Esophagus squamous epithelium (tissue), 5 donors: ENCODE measurements at regions of chr1 and their contacts with region 1.

Region 1: GRCh38 chr1:3624200-3625136 is at the start of gene TPRG1L:
- DNase-seq: peak; percentile 84
- H3K4me3 ChIP-seq: peak within 1 kb of the TSS; percentile 83 to 99 (median 90)
- H3K27ac ChIP-seq: peak within 1 kb of the TSS; percentile 84 to 97 (median 92)
- H3K4me1 ChIP-seq: peaks cover 24 to 40% (median 26%) of the 10 kb centered on the region in 3 donors
- H3K27me3 ChIP-seq: no peaks in the 10 kb centered on the region
- CTCF ChIP-seq: peak in 1 of 6 experiments; percentile 37
- POLR2A ChIP-seq: peak in 1 of 4 donors; percentile 66
- total RNA-seq, gene TPRG1L: 27.9 to 44.7 (median 33.2) TPM

Region 2: DNA sequence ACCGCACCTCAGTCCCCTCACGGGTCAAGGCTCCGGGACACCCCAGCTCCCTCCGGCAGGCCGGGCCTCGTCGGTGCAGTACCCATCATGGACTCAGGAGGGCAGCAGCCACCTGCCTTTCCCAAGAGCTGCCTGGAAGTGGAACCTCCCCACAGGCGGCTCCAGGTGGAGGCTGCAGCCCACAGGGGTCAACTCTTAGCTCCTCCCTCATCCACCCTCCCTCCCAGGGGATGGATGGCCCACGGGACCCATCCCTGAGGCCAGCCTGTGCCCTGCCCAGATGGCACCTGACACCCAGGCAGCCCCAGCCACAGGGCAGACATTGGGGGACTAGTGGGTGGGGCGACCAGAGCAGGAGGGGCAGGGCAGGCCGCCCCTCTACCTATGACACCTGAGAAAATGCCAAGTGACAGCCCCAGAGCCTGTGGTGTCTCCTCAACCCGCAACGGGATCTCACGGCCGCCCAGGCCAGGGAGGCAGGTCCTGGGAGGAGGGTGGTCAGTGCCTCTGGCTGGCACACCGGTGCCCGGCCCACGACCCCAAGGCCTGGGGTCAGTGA is 171.2 kb before region 1 on chr1:
- intact Hi-C with region 1: loop called (anchors 5 kb)
- DNase-seq: no peak
- H3K4me3 ChIP-seq: no peak overlapping the region
- H3K27ac ChIP-seq: peak overlapping the region in 3 of 4 donors; percentile 72 to 85 (median 82)
- H3K4me1 ChIP-seq: peaks cover 27 to 56% (median 36%) of the 10 kb centered on the region in 3 donors
- H3K27me3 ChIP-seq: peaks cover 0 to 72% (median 2%) of the 10 kb centered on the region in 4 donors
- CTCF ChIP-seq: peak; percentile 89 to 98 (median 93)
- POLR2A ChIP-seq: no peak

Region 3: GRCh38 chr1:3821004-3821403 is 196.5 kb after region 1 on chr1:
- intact Hi-C with region 1: no loop called
- DNase-seq: no peak
- H3K4me3 ChIP-seq: no peak overlapping the region
- H3K27ac ChIP-seq: no peak overlapping the region
- H3K4me1 ChIP-seq: no peaks in the 10 kb centered on the region
- H3K27me3 ChIP-seq: no peaks in the 10 kb centered on the region
- CTCF ChIP-seq: no peak
- POLR2A ChIP-seq: no peak